CD8-positive, alpha-beta T cell (primary cell): ENCODE measurements at regions of chr10 and their contacts with region 1.

Region 1: DNA sequence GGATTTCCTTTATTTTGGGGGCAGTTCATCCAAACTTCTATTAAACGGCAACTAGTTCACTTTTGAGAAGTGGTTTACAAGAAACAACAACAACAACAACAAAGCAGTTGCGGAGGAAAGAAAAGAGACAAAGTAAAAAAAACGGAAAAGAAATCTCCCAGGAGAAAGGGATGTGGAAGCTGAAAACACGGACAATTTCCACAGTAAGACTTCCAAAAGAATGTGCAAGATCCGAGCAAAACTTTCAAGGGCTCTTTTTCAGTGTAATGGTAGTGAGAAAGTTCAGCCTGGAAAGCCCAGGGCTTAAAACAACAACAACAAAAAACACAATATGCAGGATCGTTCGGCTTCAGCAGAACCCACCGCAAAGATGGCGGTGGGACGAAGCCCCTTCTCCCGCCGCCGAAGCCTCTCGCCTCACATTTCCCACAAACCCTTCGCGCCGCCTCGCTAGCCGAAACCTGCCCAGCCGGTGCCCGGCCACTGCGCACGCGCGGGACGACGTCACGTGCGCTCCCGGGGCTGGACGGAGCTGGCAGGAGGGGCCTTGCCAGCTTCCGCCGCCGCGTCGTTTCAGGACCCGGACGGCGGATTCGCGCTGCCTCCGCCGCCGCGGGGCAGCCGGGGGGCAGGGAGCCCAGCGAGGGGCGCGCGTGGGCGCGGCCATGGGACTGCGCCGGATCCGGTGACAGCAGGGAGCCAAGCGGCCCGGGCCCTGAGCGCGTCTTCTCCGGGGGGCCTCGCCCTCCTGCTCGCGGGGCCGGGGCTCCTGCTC is at the start of gene TNKS2:
- DNase-seq: peak; percentile 83 to 96 (median 92)
- ATAC-seq: peak; percentile 69
- H3K4me3 ChIP-seq: peak within 1 kb of the TSS; percentile 81 to 85
- H3K4me3 Mint-ChIP-seq: peak within 1 kb of the TSS; percentile 99
- H3K27ac ChIP-seq: peak within 1 kb of the TSS; percentile 88 to 91
- H3K27ac Mint-ChIP-seq: peak within 1 kb of the TSS; percentile 99
- H3K4me1 ChIP-seq: peaks cover 35% of the 10 kb centered on the region
- H3K4me1 Mint-ChIP-seq: peaks cover 64% of the 10 kb centered on the region
- H3K27me3 ChIP-seq: no peaks in the 10 kb centered on the region
- H3K27me3 Mint-ChIP-seq: no peaks in the 10 kb centered on the region
- CTCF ChIP-seq: no peak
- total RNA-seq, gene TNKS2: 46.4 to 49.4 TPM

Region 2: DNA sequence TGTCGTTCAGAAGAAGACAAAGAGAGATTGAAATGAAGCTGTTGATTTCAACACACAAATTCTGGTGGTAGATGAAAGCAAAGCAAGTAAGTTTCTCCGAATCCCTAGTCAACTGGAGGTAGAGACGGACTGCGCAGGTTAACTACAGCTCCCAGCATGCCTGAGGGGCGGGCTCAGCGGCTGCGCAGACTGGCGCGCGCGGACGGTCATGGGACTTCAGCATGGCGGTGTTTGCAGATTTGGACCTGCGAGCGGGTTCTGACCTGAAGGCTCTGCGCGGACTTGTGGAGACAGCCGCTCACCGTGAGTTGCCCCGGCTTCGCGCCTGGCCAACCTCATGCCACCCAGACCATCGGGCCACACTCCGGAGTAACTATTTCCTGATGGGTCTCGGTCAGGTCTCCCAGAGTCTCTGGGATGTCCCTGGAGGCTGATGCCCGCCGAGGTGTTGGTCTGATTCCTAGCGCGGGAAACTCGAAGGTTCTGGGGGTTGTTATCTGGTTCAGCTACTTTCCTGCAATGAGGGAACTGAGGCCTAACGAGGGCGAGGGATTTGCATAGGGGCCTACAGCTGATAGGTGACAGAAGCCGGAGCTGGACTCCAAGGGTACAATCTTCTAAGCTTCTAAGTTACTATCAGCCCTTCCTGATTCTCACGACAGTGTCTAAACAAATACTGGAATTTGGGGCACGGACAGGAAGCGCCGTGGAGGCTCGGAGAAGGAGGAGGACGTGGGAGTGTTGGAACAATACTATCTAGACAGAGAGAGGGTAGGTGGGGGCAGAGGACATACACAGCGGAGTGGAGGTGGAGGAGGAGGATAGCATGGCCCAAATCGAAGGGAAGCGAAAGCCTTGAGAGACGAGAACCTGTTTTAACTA is 926.1 kb before region 1 on chr10 and contains the start of gene RPP30:
- CTCF ChIA-PET with region 1: no interaction called
- POLR2A ChIA-PET with region 1: no interaction called
- intact Hi-C with region 1: loop called (anchors 5 to 10 kb)
- DNase-seq: peak; percentile 65 to 84 (median 79)
- ATAC-seq: peak; percentile 99
- H3K4me3 ChIP-seq: peak within 1 kb of the TSS; percentile 73 to 95
- H3K4me3 Mint-ChIP-seq: peak within 1 kb of the TSS; percentile 97
- H3K27ac ChIP-seq: peak within 1 kb of the TSS; percentile 34 to 58
- H3K27ac Mint-ChIP-seq: peak within 1 kb of the TSS; percentile 88
- H3K4me1 ChIP-seq: peaks cover 18% of the 10 kb centered on the region
- H3K4me1 Mint-ChIP-seq: peaks cover 40% of the 10 kb centered on the region
- H3K27me3 ChIP-seq: no peaks in the 10 kb centered on the region
- H3K27me3 Mint-ChIP-seq: peaks cover 20% of the 10 kb centered on the region
- CTCF ChIP-seq: no peak
- total RNA-seq, gene RPP30: 29.7 TPM

Region 3: GRCh38 chr10:91409869-91410637 is 388.0 kb before region 1 on chr10 and contains the start of gene HECTD2:
- CTCF ChIA-PET with region 1: no interaction called
- POLR2A ChIA-PET with region 1: no interaction called
- intact Hi-C with region 1: loop called (anchors 1 to 5 kb)
- DNase-seq: peak; percentile 65 to 92 (median 82)
- ATAC-seq: peak; percentile 86
- H3K4me3 ChIP-seq: peak within 1 kb of the TSS; percentile 91 to 97
- H3K4me3 Mint-ChIP-seq: peak within 1 kb of the TSS; percentile 86
- H3K27ac ChIP-seq: peak within 1 kb of the TSS; percentile 90 to 95
- H3K27ac Mint-ChIP-seq: peak within 1 kb of the TSS; percentile 90
- H3K4me1 ChIP-seq: peaks cover 12% of the 10 kb centered on the region
- H3K4me1 Mint-ChIP-seq: peaks cover 13% of the 10 kb centered on the region
- H3K27me3 ChIP-seq: no peaks in the 10 kb centered on the region
- H3K27me3 Mint-ChIP-seq: no peaks in the 10 kb centered on the region
- CTCF ChIP-seq: peak; percentile 41
- total RNA-seq, gene HECTD2: 0.69 to 1.5 TPM

Region 4: DNA sequence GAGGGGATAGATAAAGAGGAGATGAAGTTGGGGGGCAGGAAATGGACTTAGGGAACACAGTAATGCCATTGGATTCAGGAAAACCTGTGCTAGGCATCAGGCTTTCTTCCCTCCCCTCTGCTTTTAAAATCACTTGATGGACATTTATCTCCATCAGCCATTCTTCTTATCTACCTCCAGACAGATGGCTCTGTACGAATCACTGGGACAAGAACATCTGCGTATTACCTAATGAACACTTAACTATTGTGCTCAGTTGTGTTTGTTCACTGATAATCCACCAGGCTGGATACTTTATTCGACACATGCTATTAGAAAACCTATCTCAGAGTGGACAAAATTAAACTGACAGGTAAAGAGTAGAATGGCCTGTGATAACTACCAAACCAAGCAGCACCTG is 40.1 kb after region 1 on chr10:
- CTCF ChIA-PET with region 1: no interaction called
- POLR2A ChIA-PET with region 1: interaction called, 4 read pairs
- intact Hi-C with region 1: loop called in 1 of 2 experiments (anchors 5 kb)
- DNase-seq: no peak
- ATAC-seq: no peak
- H3K4me3 ChIP-seq: no peak overlapping the region
- H3K4me3 Mint-ChIP-seq: no peak overlapping the region
- H3K27ac ChIP-seq: no peak overlapping the region
- H3K27ac Mint-ChIP-seq: no peak overlapping the region
- H3K4me1 ChIP-seq: no peaks in the 10 kb centered on the region
- H3K4me1 Mint-ChIP-seq: no peaks in the 10 kb centered on the region
- H3K27me3 ChIP-seq: no peaks in the 10 kb centered on the region
- H3K27me3 Mint-ChIP-seq: no peaks in the 10 kb centered on the region
- CTCF ChIP-seq: no peak

Region 5: GRCh38 chr10:91864099-91864498 is 66.0 kb after region 1 on chr10:
- CTCF ChIA-PET with region 1: no interaction called
- POLR2A ChIA-PET with region 1: no interaction called
- intact Hi-C with region 1: no loop called
- DNase-seq: no peak
- ATAC-seq: no peak
- H3K4me3 ChIP-seq: no peak overlapping the region
- H3K4me3 Mint-ChIP-seq: no peak overlapping the region
- H3K27ac ChIP-seq: no peak overlapping the region
- H3K27ac Mint-ChIP-seq: no peak overlapping the region
- H3K4me1 ChIP-seq: no peaks in the 10 kb centered on the region
- H3K4me1 Mint-ChIP-seq: no peaks in the 10 kb centered on the region
- H3K27me3 ChIP-seq: no peaks in the 10 kb centered on the region
- H3K27me3 Mint-ChIP-seq: no peaks in the 10 kb centered on the region
- CTCF ChIP-seq: no peak

Region 6: GRCh38 chr10:92290837-92291615 is 493.0 kb after region 1 on chr10 and contains the starts of genes CPEB3 and MARCHF5:
- CTCF ChIA-PET with region 1: no interaction called
- POLR2A ChIA-PET with region 1: no interaction called
- intact Hi-C with region 1: loop called in 1 of 2 experiments (anchors 5 kb)
- DNase-seq: peak; percentile 78 to 96 (median 90)
- ATAC-seq: peak; percentile 97
- H3K4me3 ChIP-seq: peak within 1 kb of the TSS; percentile 91 to 98
- H3K4me3 Mint-ChIP-seq: peak within 1 kb of the TSS; percentile 97
- H3K27ac ChIP-seq: peak within 1 kb of the TSS; percentile 70 to 83
- H3K27ac Mint-ChIP-seq: peak within 1 kb of the TSS; percentile 88
- H3K4me1 ChIP-seq: peaks cover 20% of the 10 kb centered on the region
- H3K4me1 Mint-ChIP-seq: peaks cover 36% of the 10 kb centered on the region
- H3K27me3 ChIP-seq: no peaks in the 10 kb centered on the region
- H3K27me3 Mint-ChIP-seq: no peaks in the 10 kb centered on the region
- CTCF ChIP-seq: peak; percentile 50
- total RNA-seq, gene CPEB3: 0.71 to 1.1 TPM
- total RNA-seq, gene MARCHF5: 48.3 to 48.9 TPM

Region 7: GRCh38 chr10:93496322-93497041 is 1698.4 kb after region 1 on chr10 and contains the start of gene CEP55:
- CTCF ChIA-PET with region 1: no interaction called
- POLR2A ChIA-PET with region 1: no interaction called
- intact Hi-C with region 1: loop called in 1 of 2 experiments (anchors 10 kb)
- DNase-seq: peak; percentile 90 to 96 (median 95)
- ATAC-seq: peak; percentile 99
- H3K4me3 ChIP-seq: peak within 1 kb of the TSS; percentile 87 to 97
- H3K4me3 Mint-ChIP-seq: peak within 1 kb of the TSS; percentile 90
- H3K27ac ChIP-seq: peak within 1 kb of the TSS in 1 of 2 experiments; percentile 54
- H3K27ac Mint-ChIP-seq: no peak within 1 kb of the TSS
- H3K4me1 ChIP-seq: peaks cover 10% of the 10 kb centered on the region
- H3K4me1 Mint-ChIP-seq: peaks cover 14% of the 10 kb centered on the region
- H3K27me3 ChIP-seq: no peaks in the 10 kb centered on the region
- H3K27me3 Mint-ChIP-seq: peaks cover 10% of the 10 kb centered on the region
- CTCF ChIP-seq: no peak
- total RNA-seq, gene CEP55: 0.16 TPM in 1 of 2 experiments, not detected in the other